Activated B cell treated with CpG ODN at 0.5 μM for 24 hours (primary cell): ENCODE measurements at regions of chr11 and their contacts with region 1.

Region 1: GRCh38 chr11:118435893-118436624 is at the start of gene KMT2A:
- DNase-seq: peak; percentile 99
- ATAC-seq: peak; percentile 65
- H3K4me3 Mint-ChIP-seq: peak within 1 kb of the TSS; percentile 94
- H3K27ac Mint-ChIP-seq: peak within 1 kb of the TSS; percentile 94
- H3K4me1 Mint-ChIP-seq: peaks cover 37% of the 10 kb centered on the region
- H3K27me3 Mint-ChIP-seq: no peaks in the 10 kb centered on the region
- CTCF ChIP-seq: no peak
- total RNA-seq, gene KMT2A: 104 and 117 TPM in 2 replicates

Region 2: DNA sequence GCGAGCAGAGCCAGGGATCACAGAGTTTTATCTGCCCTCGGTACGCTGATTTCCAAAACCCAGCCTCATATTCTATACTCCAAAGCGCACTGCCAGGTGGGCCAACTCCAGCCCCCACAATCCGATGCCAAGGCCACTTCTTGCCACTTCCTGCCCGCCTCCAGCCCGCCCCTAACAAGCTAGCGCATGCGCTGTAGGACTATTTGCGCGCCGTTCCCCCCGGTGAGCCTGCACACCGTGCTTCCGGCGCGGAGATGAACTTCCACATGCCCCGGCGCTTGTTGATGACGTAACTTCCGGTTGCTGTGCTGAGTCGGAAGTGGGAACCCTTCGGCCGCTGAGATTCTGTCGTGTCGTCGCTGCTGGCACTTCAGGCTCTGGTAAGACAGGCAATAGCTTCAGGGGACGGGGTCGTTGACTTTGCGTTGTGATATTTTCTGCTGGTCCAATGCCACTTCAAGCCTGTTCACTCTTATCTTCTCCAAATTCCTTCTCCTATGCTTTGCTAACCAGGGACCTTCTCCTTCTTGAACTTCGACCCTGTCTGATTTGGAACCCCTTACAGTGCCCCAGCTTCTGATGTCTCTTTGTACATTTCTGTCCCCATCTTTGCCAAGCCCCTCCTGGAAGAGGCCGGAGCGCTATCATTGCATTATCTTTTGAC is 76.6 kb before region 1 on chr11 and contains the start of gene UBE4A:
- CTCF ChIA-PET with region 1: no interaction called
- POLR2A ChIA-PET with region 1: interaction called, 4 read pairs
- intact Hi-C with region 1: loop called (anchors 1 kb)
- DNase-seq: peak; percentile 93
- ATAC-seq: peak; percentile 86
- H3K4me3 Mint-ChIP-seq: peak within 1 kb of the TSS; percentile 98
- H3K27ac Mint-ChIP-seq: peak within 1 kb of the TSS; percentile 94
- H3K4me1 Mint-ChIP-seq: peaks cover 39% of the 10 kb centered on the region
- H3K27me3 Mint-ChIP-seq: no peaks in the 10 kb centered on the region
- CTCF ChIP-seq: no peak
- total RNA-seq, gene UBE4A: 28.4 and 34.2 TPM in 2 replicates

Region 3: DNA sequence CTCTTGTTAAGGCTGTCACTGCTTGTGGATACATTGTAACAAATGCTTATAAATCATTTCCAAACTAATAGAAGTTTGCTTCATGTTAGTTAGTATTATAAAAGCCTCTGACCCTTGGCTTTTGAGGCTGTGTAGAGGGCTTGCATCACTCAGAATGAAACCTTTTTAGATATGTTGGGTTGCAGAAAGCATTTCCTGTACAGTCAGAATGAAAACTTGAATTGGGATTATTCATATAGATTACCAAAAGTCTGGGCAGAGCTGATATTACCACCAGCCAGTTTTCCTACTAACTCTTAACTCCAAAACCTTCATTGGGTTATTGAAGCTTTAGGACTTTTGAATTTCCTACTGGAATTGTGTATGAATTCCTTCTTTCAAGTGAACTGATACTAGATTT is 12.2 kb after region 1 on chr11:
- CTCF ChIA-PET with region 1: interaction called, 3 read pairs
- POLR2A ChIA-PET with region 1: interaction called, 16 read pairs
- intact Hi-C with region 1: loop called (anchors 1 kb)
- DNase-seq: no peak
- ATAC-seq: peak; percentile 63
- H3K4me3 Mint-ChIP-seq: no peak overlapping the region
- H3K27ac Mint-ChIP-seq: no peak overlapping the region
- H3K4me1 Mint-ChIP-seq: peaks cover 66% of the 10 kb centered on the region
- H3K27me3 Mint-ChIP-seq: no peaks in the 10 kb centered on the region
- CTCF ChIP-seq: no peak

Region 4: DNA sequence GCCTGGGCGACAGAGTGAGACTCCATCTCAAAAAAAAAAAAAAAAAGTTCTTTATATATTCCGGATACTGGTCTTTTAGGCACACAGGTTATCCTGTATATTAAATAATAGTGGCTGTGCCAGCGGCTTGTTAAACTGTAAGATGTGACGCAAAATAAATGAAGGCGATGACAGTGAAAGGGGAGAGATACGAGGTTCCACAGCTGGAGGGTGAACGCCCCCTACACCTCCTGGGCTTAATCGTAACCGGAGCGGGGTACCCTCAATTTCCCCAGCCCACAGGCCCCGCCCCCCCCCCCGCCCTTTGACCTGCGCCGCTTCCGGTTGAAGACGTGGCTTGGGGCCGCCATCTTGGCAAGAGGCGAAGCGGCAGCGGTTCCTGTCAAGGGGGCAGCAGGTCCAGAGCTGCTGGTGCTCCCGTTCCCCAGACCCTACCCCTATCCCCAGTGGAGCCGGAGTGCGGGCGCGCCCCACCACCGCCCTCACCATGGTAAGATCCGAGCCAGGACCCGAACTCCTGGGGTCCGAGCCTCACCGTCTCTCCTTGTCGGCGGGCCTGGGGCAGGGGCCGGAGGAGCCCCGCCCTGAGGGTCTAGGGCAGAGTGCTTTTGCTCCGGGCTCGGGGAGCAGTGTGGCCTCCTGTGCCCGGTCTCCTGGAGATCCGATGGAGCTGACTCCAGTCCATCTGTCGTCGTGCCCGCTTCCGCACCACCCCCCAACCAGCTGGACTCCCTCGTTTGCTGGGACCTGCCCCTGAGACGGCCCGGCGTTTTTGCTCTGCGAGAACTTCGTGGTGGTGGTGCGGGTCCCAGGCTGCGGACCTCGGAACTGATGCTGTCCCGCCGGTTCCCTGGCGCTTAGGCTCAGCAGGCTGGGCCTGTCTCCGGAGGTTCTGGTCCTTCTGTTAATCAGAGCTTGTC is 136.3 kb after region 1 on chr11 and contains the start of gene ARCN1:
- CTCF ChIA-PET with region 1: no interaction called
- POLR2A ChIA-PET with region 1: interaction called, 5 read pairs
- intact Hi-C with region 1: loop called (anchors 5 kb)
- DNase-seq: peak; percentile 67
- ATAC-seq: peak; percentile 88
- H3K4me3 Mint-ChIP-seq: peak within 1 kb of the TSS; percentile 93
- H3K27ac Mint-ChIP-seq: peak within 1 kb of the TSS; percentile 86
- H3K4me1 Mint-ChIP-seq: peaks cover 45% of the 10 kb centered on the region
- H3K27me3 Mint-ChIP-seq: no peaks in the 10 kb centered on the region
- CTCF ChIP-seq: no peak
- total RNA-seq, gene ARCN1: 91.3 and 94.7 TPM in 2 replicates

Region 5: DNA sequence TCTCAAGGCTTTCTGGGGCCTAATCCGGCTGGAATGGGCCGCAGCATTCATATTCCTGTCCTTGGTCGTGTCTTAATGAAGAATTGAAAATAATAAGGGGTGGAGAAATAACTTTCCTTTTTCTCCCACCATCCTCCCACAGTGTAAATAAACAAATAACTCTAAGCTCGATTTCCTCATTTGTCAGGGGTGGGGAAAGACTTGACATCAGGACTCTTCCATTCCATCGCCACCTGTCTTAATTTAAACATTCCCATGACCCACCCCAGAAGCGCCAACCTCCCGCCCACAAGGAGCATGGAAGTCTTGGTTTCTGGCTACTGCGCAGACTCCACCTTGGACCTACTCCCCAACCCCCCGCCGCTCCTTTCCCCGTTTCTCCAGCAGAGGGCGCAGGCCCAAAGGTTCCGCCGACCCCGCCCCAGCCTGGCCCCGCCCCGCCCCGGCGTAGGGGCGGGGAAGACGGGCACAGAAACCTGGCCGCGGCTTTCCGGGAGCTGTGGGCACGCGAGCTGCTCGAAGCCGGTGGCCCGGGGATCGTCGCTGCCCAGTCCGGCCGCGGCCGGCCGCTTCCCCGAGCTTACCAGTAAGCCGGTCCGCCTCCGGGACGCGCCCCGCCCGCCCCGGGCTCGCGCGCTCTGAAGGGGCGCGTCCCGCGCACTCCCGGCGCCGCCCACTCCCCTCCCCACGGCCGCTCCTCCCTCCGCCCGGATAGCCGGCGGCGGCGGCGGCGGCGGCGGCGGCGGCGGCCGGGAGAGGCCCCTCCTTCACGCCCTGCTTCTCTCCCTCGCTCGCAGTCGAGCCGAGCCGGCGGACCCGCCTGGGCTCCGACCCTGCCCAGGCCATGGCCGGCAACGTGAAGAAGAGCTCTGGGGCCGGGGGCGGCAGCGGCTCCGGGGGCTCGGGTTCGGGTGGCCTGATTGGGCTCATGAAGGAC is 769.8 kb after region 1 on chr11 and contains the start of gene CBL:
- CTCF ChIA-PET with region 1: no interaction called
- POLR2A ChIA-PET with region 1: interaction called, 6 read pairs
- intact Hi-C with region 1: loop called (anchors 5 kb)
- DNase-seq: peak; percentile 95
- ATAC-seq: peak; percentile 86
- H3K4me3 Mint-ChIP-seq: peak within 1 kb of the TSS; percentile 96
- H3K27ac Mint-ChIP-seq: peak within 1 kb of the TSS; percentile 90
- H3K4me1 Mint-ChIP-seq: peaks cover 31% of the 10 kb centered on the region
- H3K27me3 Mint-ChIP-seq: no peaks in the 10 kb centered on the region
- CTCF ChIP-seq: no peak
- total RNA-seq, gene CBL: 26.2 and 27.8 TPM in 2 replicates